ENCODE measurements at regions of chr14 and their contacts with region 1.

Region 1: DNA sequence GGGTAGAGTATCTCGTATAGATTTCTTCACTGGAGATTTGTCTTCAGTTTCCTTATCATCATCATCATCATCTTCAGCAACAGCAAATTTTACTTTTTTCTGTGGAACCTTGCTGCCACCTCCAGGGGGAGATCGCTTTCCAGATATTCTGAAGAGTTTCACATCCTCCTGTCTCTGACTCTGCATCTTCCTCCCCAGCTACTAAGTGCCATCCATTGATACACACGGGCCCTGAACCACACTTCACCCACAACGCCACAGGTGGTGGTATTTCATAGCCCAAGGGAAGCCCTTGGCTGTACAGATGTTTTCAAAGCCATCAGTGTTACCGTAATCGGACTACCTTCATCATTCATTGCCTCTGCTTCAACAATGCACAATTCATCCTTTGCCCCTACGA is 82.2 kb downstream of the PPP2R5C start:
- H3K4me3 Mint-ChIP-seq: no peak overlapping the region
- H3K27ac Mint-ChIP-seq: peak overlapping the region; percentile 52
- H3K4me1 Mint-ChIP-seq: peaks cover 45% of the 10 kb centered on the region
- H3K27me3 Mint-ChIP-seq: no peaks in the 10 kb centered on the region

Region 2: GRCh38 chr14:101774006-101774795 is 69.5 kb before region 1 on chr14:
- intact Hi-C with region 1: loop called (anchors 2 kb)
- H3K4me3 Mint-ChIP-seq: no peak overlapping the region
- H3K27ac Mint-ChIP-seq: no peak overlapping the region
- H3K4me1 Mint-ChIP-seq: peaks cover 11% of the 10 kb centered on the region
- H3K27me3 Mint-ChIP-seq: peaks cover 20% of the 10 kb centered on the region

Region 3: DNA sequence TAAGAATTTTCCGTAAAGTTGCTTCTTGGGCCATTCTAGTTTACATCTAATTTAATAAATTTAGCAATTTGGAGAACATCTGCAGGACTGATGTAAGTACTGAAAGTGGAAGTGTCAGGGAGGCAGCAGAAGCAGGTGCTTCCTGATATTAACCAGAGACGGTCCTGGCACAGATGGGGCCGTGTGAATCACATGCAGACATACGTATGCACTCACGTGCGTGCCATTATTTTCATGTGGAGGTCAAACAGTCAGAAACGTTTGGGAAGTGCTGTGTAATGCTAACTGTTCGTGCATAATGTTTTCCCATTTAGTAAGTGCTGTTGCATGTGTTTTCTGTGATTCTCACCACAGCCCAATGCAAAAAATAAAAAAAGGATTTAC is 32.9 kb after region 1 on chr14:
- intact Hi-C with region 1: loop called (anchors 5 kb)
- H3K4me3 Mint-ChIP-seq: no peak overlapping the region
- H3K27ac Mint-ChIP-seq: peak overlapping the region; percentile 67
- H3K4me1 Mint-ChIP-seq: peaks cover 60% of the 10 kb centered on the region
- H3K27me3 Mint-ChIP-seq: no peaks in the 10 kb centered on the region

Region 4: DNA sequence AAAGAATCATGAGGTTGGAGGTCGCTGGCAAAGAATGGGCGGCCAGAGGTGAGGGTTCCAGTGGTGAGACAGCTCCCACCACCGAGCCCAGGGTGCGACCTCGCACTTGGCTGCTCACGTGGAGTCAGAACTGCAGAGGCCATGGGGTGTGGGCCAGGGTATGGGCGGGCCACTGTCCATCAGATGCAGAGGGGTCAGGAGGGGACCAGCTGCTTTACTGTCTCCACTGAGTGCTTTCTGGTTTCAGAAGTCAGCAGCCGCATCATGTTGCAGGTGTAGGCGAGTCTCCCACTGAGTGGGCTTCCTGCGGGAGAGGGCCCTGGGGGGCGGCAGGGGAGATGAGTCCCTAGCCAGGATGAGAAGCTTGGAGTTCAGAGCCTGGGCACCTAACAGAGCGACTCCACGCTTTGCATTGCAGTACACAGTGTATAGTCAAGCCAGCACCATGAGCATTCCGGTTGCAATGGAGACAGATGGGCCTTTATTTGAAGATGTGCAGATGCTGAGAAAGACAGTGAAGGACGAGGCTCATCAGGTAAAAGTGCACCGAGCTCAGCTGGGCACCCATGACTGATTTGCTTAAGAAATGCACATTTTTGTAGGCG is 73.8 kb after region 1 on chr14:
- intact Hi-C with region 1: no loop called
- H3K4me3 Mint-ChIP-seq: no peak overlapping the region
- H3K27ac Mint-ChIP-seq: no peak overlapping the region
- H3K4me1 Mint-ChIP-seq: no peaks in the 10 kb centered on the region
- H3K27me3 Mint-ChIP-seq: no peaks in the 10 kb centered on the region

Region 5: GRCh38 chr14:102020058-102020971 is 176.7 kb after region 1 on chr14:
- intact Hi-C with region 1: no loop called
- H3K4me3 Mint-ChIP-seq: no peak overlapping the region
- H3K27ac Mint-ChIP-seq: no peak overlapping the region
- H3K4me1 Mint-ChIP-seq: no peaks in the 10 kb centered on the region
- H3K27me3 Mint-ChIP-seq: no peaks in the 10 kb centered on the region

Measured in dendritic cell treated with granulocyte-macrophage colony-stimulating factor and Interleukin-4, amounts not matched to agents 40 ng/mL and 50 ng/mL, for 4 days (primary cell).